Heart left ventricle (tissue), 16 donors: ENCODE measurements at regions of chr4 and their contacts with region 1.

Region 1: DNA sequence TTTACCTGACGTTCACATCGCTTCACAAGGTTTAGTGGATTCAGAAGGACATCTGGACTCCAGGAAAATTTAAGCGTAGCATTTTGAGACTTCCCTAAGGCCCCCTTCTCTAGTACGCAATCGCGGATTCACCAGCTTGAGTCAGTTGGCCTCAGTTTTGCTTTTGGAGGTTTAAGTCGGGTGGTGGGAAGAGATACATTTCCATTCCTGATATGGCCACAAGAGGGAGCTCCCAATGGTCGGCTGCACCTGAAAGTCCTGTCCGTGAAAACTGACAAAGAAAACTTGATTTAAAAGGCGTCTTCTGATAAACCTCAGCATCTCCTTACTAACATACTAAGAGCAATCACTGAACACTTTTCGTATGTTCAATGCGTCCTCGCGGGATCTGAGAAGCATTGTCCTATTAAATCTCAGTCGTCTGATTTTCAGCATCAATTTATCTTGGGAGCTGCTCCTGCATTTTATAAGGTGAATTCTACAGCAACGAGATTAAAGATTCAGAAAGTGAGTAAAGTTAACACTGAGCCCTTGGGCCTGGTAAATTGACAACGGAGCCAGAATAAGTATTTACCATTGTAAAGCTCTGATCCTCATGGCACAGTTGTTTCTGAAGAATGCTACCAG is 50.6 kb downstream of the LGI2 start:
- DNase-seq: peak in 4 of 5 donors; percentile 51 to 73 (median 62)
- ATAC-seq: peak; percentile 39 to 73 (median 57)
- H3K4me3 ChIP-seq: peak overlapping the region in 10 of 12 donors; percentile 13 to 47 (median 39)
- H3K27ac ChIP-seq: peak overlapping the region; percentile 66 to 96 (median 87)
- H3K4me1 ChIP-seq: peaks cover 0 to 42% (median 8%) of the 10 kb centered on the region in 12 donors
- H3K27me3 ChIP-seq: no peaks in the 10 kb centered on the region
- CTCF ChIP-seq: peak; percentile 82 to 95 (median 89)
- POLR2A ChIP-seq: no peak

Region 2: GRCh38 chr4:24488399-24489164 is 491.6 kb before region 1 on chr4:
- intact Hi-C with region 1: loop called in 3 of 10 experiments (anchors 10 kb)
- DNase-seq: peak; percentile 57 to 84 (median 66)
- ATAC-seq: peak; percentile 56 to 85 (median 80)
- H3K4me3 ChIP-seq: no peak overlapping the region
- H3K27ac ChIP-seq: peak overlapping the region in 1 of 12 donors; percentile 27
- H3K4me1 ChIP-seq: peaks cover 0 to 9% (median 0%) of the 10 kb centered on the region in 12 donors
- H3K27me3 ChIP-seq: no peaks in the 10 kb centered on the region
- CTCF ChIP-seq: peak; percentile 64 to 88 (median 80)
- POLR2A ChIP-seq: no peak

Region 3: GRCh38 chr4:24862073-24862751 is 118.0 kb before region 1 on chr4:
- intact Hi-C with region 1: no loop called
- DNase-seq: no peak
- ATAC-seq: no peak
- H3K4me3 ChIP-seq: no peak overlapping the region
- H3K27ac ChIP-seq: no peak overlapping the region
- H3K4me1 ChIP-seq: peaks cover 0 to 24% (median 16%) of the 10 kb centered on the region in 12 donors
- H3K27me3 ChIP-seq: no peaks in the 10 kb centered on the region
- CTCF ChIP-seq: no peak
- POLR2A ChIP-seq: no peak

Region 4: GRCh38 chr4:24912252-24913118 is 67.7 kb before region 1 on chr4 and contains the start of gene CCDC149:
- intact Hi-C with region 1: loop called in 6 of 10 experiments (anchors 1 to 10 kb)
- DNase-seq: peak; percentile 74 to 85 (median 77)
- ATAC-seq: peak; percentile 74 to 91 (median 90)
- H3K4me3 ChIP-seq: peak within 1 kb of the TSS; percentile 45 to 93 (median 66)
- H3K27ac ChIP-seq: peak within 1 kb of the TSS; percentile 79 to 98 (median 91)
- H3K4me1 ChIP-seq: peaks cover 0 to 21% (median 8%) of the 10 kb centered on the region in 12 donors
- H3K27me3 ChIP-seq: no peaks in the 10 kb centered on the region
- CTCF ChIP-seq: peak in 7 of 12 donors; percentile 6 to 38 (median 21)
- POLR2A ChIP-seq: peak in 1 of 2 donors; percentile 32
- total RNA-seq, gene CCDC149: 5.8 to 14.7 (median 10.3) TPM

Region 5: GRCh38 chr4:25043548-25043947 is 63.4 kb after region 1 on chr4:
- intact Hi-C with region 1: loop called in 2 of 10 experiments (anchors 5 kb)
- DNase-seq: no peak
- ATAC-seq: peak in 1 of 4 donors; percentile 58
- H3K4me3 ChIP-seq: no peak overlapping the region
- H3K27ac ChIP-seq: no peak overlapping the region
- H3K4me1 ChIP-seq: no peaks in the 10 kb centered on the region
- H3K27me3 ChIP-seq: no peaks in the 10 kb centered on the region
- CTCF ChIP-seq: no peak
- POLR2A ChIP-seq: no peak

Region 6: GRCh38 chr4:25144870-25145481 is 164.8 kb after region 1 on chr4:
- intact Hi-C with region 1: loop called (anchors 1 to 5 kb)
- DNase-seq: no peak
- ATAC-seq: no peak
- H3K4me3 ChIP-seq: no peak overlapping the region
- H3K27ac ChIP-seq: no peak overlapping the region
- H3K4me1 ChIP-seq: peaks cover 0 to 6% (median 0%) of the 10 kb centered on the region in 12 donors
- H3K27me3 ChIP-seq: no peaks in the 10 kb centered on the region
- CTCF ChIP-seq: peak; percentile 28 to 75 (median 62)
- POLR2A ChIP-seq: no peak

Region 7: DNA sequence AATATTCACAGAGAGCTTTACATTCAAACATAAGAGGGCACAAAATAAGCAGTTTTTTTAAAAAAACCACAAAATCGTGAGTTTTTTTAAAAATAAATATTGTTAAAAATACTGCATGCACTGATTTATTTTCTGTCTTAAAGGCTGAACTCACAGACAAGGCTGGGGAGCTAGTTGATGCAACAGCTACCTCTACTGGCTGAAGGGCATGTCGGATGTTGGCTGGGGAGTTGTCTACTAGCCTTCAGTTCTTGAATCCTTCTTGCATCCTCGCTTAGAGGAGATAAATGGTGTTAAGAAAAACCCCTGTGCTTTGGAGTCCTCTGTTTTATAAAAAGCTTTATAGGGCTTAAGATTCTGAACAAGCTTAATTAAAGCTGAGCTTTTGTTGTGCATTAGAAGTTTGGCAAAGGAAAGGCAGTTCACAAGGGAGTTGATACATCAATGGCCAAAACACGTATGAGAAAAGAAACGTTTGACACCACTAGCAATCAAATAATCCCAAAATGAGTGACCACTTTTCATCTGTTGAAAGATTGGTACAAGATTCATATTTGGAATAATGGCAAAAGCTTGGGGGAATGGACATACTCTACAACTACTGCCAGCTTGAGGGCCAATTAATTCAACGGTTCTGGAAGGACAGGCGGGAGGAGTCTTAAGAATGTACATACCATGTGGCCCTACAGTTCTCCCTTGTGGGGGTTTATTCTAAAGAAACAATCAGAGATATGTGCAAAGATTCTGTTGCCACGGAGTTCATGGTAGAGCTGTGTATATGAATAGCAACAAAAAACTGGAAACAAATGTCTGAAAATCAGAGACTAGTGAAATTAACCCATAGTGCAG is 787.9 kb after region 1 on chr4:
- intact Hi-C with region 1: loop called in 1 of 10 experiments (anchors 10 kb)
- DNase-seq: peak in 4 of 5 donors; percentile 40 to 57 (median 52)
- ATAC-seq: peak; percentile 73 to 92 (median 89)
- H3K4me3 ChIP-seq: no peak overlapping the region
- H3K27ac ChIP-seq: no peak overlapping the region
- H3K4me1 ChIP-seq: peaks cover 0 to 9% (median 0%) of the 10 kb centered on the region in 12 donors
- H3K27me3 ChIP-seq: no peaks in the 10 kb centered on the region
- CTCF ChIP-seq: peak; percentile 64 to 87 (median 76)
- POLR2A ChIP-seq: no peak